B cell (primary cell): ENCODE measurements at regions of chr4 and their contacts with region 1.

Region 1: DNA sequence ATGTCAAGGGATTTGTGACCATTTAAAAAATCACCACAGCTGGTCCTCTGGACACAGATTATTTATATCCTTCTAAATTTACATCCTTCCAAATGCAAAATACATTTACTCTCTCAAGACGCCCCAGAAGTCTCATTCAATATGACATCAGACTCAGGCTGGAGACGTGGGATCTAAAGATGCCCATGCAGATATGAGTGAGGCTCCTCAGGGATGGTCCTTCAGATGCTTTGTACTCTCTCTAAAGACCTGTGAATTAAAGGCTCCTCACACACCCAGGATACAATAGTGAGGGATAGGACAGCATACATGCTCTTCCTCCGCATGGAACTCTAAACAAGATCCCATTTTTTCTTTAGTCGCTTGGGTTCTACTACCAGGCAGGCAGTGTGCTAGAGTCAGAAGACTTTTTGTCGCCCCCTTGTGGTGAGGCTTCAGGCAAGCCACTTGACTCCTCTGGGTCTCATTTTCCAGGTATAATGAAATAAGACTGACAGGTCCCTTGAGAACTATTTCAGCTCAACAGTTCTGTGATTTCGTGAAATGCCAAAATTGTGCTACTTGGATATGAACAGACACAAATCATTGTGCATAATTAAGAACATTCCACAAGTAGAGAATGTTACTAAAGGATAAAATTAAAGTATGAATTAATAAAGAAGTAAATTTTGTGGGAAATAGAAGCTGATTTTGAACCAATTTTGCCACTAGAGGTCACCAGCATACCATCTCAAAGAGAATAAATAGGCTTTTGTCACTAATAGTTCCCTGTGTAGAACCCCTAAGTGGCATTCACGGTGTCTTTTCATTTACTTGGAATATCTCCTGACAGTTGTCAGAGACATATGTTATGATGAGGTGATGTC is 13.7 kb upstream of the SCOC start:
- DNase-seq: peak; percentile 84
- ATAC-seq: peak; percentile 90
- H3K4me3 ChIP-seq: no peak overlapping the region
- H3K4me3 Mint-ChIP-seq: no peak overlapping the region
- H3K27ac ChIP-seq: no peak overlapping the region
- H3K27ac Mint-ChIP-seq: no peak overlapping the region
- H3K4me1 ChIP-seq: peaks cover 0 to 3% of the 10 kb centered on the region in 2 donors
- H3K4me1 Mint-ChIP-seq: peaks cover 7% of the 10 kb centered on the region
- H3K27me3 ChIP-seq: peaks cover 0 to 2% (median 0%) of the 10 kb centered on the region in 4 experiments
- H3K27me3 Mint-ChIP-seq: peaks cover 12% of the 10 kb centered on the region
- CTCF ChIP-seq: peak; percentile 98

Region 2: GRCh38 chr4:139734875-139735380 is 624.9 kb before region 1 on chr4:
- CTCF ChIA-PET with region 1: interaction called, 10 read pairs
- POLR2A ChIA-PET with region 1: no interaction called
- intact Hi-C with region 1: loop called (anchors 1 kb)
- DNase-seq: peak; percentile 86
- ATAC-seq: peak; percentile 84
- H3K4me3 ChIP-seq: peak overlapping the region; percentile 33 to 78 (median 51)
- H3K4me3 Mint-ChIP-seq: peak overlapping the region; percentile 86
- H3K27ac ChIP-seq: peak overlapping the region in 1 of 2 donors; percentile 48
- H3K27ac Mint-ChIP-seq: no peak overlapping the region
- H3K4me1 ChIP-seq: peaks cover 17 to 23% of the 10 kb centered on the region in 2 donors
- H3K4me1 Mint-ChIP-seq: peaks cover 17% of the 10 kb centered on the region
- H3K27me3 ChIP-seq: peaks cover 0 to 27% (median 19%) of the 10 kb centered on the region in 4 experiments
- H3K27me3 Mint-ChIP-seq: peaks cover 35% of the 10 kb centered on the region
- CTCF ChIP-seq: peak; percentile 72

Region 3: DNA sequence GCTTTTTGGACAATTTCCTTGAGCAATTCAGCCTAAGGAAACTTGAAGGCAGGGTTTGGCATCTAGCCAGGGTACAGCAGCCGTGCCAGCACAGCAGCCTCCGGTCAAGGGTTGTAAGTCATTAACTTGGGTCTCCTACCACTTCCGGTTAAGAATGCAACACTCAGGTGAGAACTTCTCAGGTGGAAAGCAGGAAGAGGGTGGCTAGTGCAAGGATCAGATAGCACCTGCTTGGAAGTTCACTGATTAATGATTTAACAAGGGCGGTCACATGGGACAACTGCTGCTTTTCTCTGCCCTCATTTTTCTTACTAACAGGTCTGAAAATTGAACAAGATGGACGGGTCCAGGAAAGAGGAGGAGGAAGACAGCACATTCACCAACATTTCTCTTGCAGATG is 16.5 kb before region 1 on chr4:
- CTCF ChIA-PET with region 1: interaction called, 15 read pairs
- POLR2A ChIA-PET with region 1: no interaction called
- intact Hi-C with region 1: no loop called
- DNase-seq: no peak
- ATAC-seq: no peak
- H3K4me3 ChIP-seq: no peak overlapping the region
- H3K4me3 Mint-ChIP-seq: no peak overlapping the region
- H3K27ac ChIP-seq: no peak overlapping the region
- H3K27ac Mint-ChIP-seq: no peak overlapping the region
- H3K4me1 ChIP-seq: peaks cover 2 to 5% of the 10 kb centered on the region in 2 donors
- H3K4me1 Mint-ChIP-seq: peaks cover 4% of the 10 kb centered on the region
- H3K27me3 ChIP-seq: peaks cover 0 to 13% (median 6%) of the 10 kb centered on the region in 4 experiments
- H3K27me3 Mint-ChIP-seq: peaks cover 22% of the 10 kb centered on the region
- CTCF ChIP-seq: no peak

Region 4: DNA sequence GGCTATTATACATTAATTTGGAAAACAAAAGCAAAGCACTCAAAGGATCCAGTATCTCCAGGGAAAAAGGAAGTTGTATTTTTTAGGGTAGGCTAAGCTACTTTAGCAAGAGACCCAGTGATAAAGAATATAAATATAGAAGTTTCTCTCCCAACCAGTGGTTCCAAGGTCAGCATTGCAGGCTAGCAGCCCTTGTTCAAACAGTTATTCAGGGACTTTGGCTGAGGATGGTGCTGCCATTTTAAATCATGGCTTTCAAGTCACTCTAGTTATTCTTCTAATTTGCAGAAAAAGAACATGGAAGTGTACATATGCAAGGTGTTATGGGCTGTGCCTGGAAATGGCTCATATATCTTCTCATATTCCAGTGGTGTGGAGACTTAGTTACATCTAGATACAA is 22.9 kb after region 1 on chr4:
- CTCF ChIA-PET with region 1: interaction called, 11 read pairs
- POLR2A ChIA-PET with region 1: no interaction called
- intact Hi-C with region 1: no loop called
- DNase-seq: no peak
- ATAC-seq: no peak
- H3K4me3 ChIP-seq: no peak overlapping the region
- H3K4me3 Mint-ChIP-seq: no peak overlapping the region
- H3K27ac ChIP-seq: no peak overlapping the region
- H3K27ac Mint-ChIP-seq: no peak overlapping the region
- H3K4me1 ChIP-seq: no peaks in the 10 kb centered on the region
- H3K4me1 Mint-ChIP-seq: no peaks in the 10 kb centered on the region
- H3K27me3 ChIP-seq: no peaks in the 10 kb centered on the region
- H3K27me3 Mint-ChIP-seq: no peaks in the 10 kb centered on the region
- CTCF ChIP-seq: no peak

Region 5: DNA sequence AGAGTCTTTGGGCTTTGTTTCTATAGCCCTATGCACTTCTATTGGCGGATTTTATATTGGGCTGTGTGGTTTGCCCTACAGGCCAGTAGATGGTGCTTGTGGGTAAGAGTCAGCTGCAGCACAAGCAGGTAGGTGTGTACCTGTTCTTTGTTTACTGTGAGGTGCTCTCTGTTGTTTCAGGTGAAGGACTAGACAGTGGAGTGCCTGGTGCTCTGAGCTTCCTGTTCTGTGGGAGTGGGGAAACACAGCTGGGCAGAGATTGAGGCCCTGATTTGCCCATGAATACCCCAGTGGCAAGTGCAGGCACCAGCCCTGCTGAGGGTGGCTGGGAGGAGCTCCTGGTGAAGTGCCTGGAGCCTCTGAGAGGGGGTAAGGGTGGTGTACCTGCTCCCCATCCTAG is 235.3 kb after region 1 on chr4:
- CTCF ChIA-PET with region 1: interaction called, 15 read pairs
- POLR2A ChIA-PET with region 1: interaction called, 4 read pairs
- intact Hi-C with region 1: no loop called
- DNase-seq: peak; percentile 53
- ATAC-seq: peak; percentile 73
- H3K4me3 ChIP-seq: no peak overlapping the region
- H3K4me3 Mint-ChIP-seq: no peak overlapping the region
- H3K27ac ChIP-seq: no peak overlapping the region
- H3K27ac Mint-ChIP-seq: no peak overlapping the region
- H3K4me1 ChIP-seq: no peaks in the 10 kb centered on the region
- H3K4me1 Mint-ChIP-seq: no peaks in the 10 kb centered on the region
- H3K27me3 ChIP-seq: peaks cover 0 to 8% (median 4%) of the 10 kb centered on the region in 4 experiments
- H3K27me3 Mint-ChIP-seq: peaks cover 45% of the 10 kb centered on the region
- CTCF ChIP-seq: peak; percentile 62

Region 6: GRCh38 chr4:140617499-140618248 is 257.9 kb after region 1 on chr4:
- CTCF ChIA-PET with region 1: interaction called, 12 read pairs
- POLR2A ChIA-PET with region 1: no interaction called
- intact Hi-C with region 1: no loop called
- DNase-seq: no peak
- ATAC-seq: no peak
- H3K4me3 ChIP-seq: no peak overlapping the region
- H3K4me3 Mint-ChIP-seq: no peak overlapping the region
- H3K27ac ChIP-seq: no peak overlapping the region
- H3K27ac Mint-ChIP-seq: peak overlapping the region; percentile 16
- H3K4me1 ChIP-seq: peaks cover 0 to under 1% of the 10 kb centered on the region in 2 donors
- H3K4me1 Mint-ChIP-seq: no peaks in the 10 kb centered on the region
- H3K27me3 ChIP-seq: no peaks in the 10 kb centered on the region
- H3K27me3 Mint-ChIP-seq: no peaks in the 10 kb centered on the region
- CTCF ChIP-seq: no peak

Region 7: DNA sequence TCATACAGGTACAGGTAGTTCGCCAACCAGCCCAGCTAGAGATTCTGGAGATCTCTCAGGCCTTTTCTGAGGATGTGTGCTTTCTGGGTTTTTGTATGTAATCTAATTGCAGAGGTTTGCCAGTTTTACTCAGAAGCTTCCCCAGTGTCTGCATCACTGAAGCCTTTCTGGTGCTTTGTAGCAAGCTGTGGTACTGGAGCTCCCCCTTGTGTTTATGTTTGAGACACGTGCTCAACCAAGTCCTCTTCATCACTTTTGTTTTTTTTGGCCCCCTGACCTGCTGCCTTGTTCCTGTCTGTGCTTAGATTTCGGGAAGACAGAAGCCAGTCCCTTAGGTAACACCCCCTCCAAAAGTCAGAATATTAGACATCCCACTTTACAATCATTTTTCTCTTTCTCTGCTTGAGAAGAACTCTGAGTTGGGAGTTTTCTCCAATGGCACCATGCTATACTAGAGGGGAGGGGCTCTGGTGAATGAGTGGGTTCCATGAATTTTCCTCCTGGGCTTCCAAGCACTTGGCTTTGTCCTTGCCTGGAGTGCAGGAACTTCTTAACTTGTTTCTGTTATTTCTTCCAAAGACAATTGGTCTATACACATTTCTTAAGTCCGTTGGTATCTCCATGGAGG is 524.8 kb after region 1 on chr4:
- CTCF ChIA-PET with region 1: interaction called, 154 read pairs
- POLR2A ChIA-PET with region 1: no interaction called
- intact Hi-C with region 1: no loop called
- DNase-seq: peak; percentile 76
- ATAC-seq: peak; percentile 67
- H3K4me3 ChIP-seq: no peak overlapping the region
- H3K4me3 Mint-ChIP-seq: no peak overlapping the region
- H3K27ac ChIP-seq: no peak overlapping the region
- H3K27ac Mint-ChIP-seq: peak overlapping the region; percentile 38
- H3K4me1 ChIP-seq: no peaks in the 10 kb centered on the region
- H3K4me1 Mint-ChIP-seq: peaks cover 3% of the 10 kb centered on the region
- H3K27me3 ChIP-seq: peaks cover 0 to 17% (median 0%) of the 10 kb centered on the region in 4 experiments
- H3K27me3 Mint-ChIP-seq: peaks cover 29% of the 10 kb centered on the region
- CTCF ChIP-seq: peak; percentile 79